Pancreas (tissue), 10 donors: ENCODE measurements at regions of chr16 and their contacts with region 1.

Region 1: GRCh38 chr16:24499193-24499814 is 40.1 kb upstream of the RBBP6 start:
- DNase-seq: no peak
- ATAC-seq: peak in 1 of 4 donors; percentile 52
- H3K4me3 ChIP-seq: no peak overlapping the region
- H3K27ac ChIP-seq: no peak overlapping the region
- H3K4me1 ChIP-seq: no peaks in the 10 kb centered on the region
- H3K27me3 ChIP-seq: no peaks in the 10 kb centered on the region
- CTCF ChIP-seq: no peak

Region 2: DNA sequence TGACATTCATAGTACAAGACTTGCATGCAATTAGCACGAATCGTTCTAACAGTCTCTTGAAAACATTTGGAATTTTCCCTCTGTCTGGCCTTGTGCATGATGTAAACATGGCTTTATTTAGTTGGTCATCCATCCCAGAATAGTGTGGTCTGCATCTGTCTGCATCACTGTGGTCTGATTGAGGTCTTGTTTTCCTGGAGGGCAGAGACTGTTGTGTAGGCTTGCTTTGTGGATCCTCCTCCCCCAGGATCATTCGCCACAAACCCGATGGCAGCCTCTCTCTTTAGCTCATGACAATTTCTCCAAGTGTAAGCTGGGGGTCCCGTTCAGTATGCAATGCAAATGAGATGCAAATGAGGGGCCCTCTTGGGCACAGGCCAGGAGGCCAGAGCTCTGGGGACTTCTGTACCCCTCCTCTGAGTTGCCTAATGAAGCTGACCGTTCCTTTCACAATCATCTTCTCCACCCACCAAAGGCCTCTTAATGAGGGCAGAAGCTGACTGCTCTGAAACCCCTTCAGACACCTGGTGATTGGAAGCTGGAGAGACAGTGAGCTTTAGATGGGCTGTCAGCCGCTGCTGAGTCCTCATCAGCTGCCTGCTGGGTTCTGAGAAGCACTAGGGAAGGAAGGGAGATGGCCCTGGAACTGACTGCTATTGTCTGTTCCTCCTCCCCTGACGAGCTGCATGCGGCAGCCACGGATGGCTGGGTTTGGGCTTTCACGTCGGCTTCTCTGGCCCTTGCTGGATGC is 444.4 kb before region 1 on chr16:
- intact Hi-C with region 1: loop called in 1 of 3 experiments (anchors 5 kb)
- DNase-seq: no peak
- ATAC-seq: no peak
- H3K4me3 ChIP-seq: no peak overlapping the region
- H3K27ac ChIP-seq: no peak overlapping the region
- H3K4me1 ChIP-seq: no peaks in the 10 kb centered on the region
- H3K27me3 ChIP-seq: peaks cover 0 to 7% (median 0%) of the 10 kb centered on the region in 4 donors
- CTCF ChIP-seq: no peak

Region 3: GRCh38 chr16:24282141-24282540 is 217.2 kb before region 1 on chr16:
- intact Hi-C with region 1: no loop called
- DNase-seq: no peak
- ATAC-seq: no peak
- H3K4me3 ChIP-seq: no peak overlapping the region
- H3K27ac ChIP-seq: no peak overlapping the region
- H3K4me1 ChIP-seq: no peaks in the 10 kb centered on the region
- H3K27me3 ChIP-seq: peaks cover 0 to 3% (median 0%) of the 10 kb centered on the region in 4 donors
- CTCF ChIP-seq: no peak